CD4-positive, alpha-beta T cell (primary cell): ENCODE measurements at regions of chr1 and their contacts with region 1.

Region 1: GRCh38 chr1:41341772-41342562 is 19.3 kb upstream of the FOXO6 start:
- DNase-seq: peak in 1 of 14 experiments; percentile 21
- ATAC-seq: no peak
- H3K4me3 ChIP-seq: no peak overlapping the region
- H3K4me3 Mint-ChIP-seq: no peak overlapping the region
- H3K27ac ChIP-seq: no peak overlapping the region
- H3K27ac Mint-ChIP-seq: no peak overlapping the region
- H3K4me1 ChIP-seq: no peaks in the 10 kb centered on the region
- H3K4me1 Mint-ChIP-seq: no peaks in the 10 kb centered on the region
- H3K27me3 ChIP-seq: peaks cover 6 to 9% of the 10 kb centered on the region in 2 experiments
- H3K27me3 Mint-ChIP-seq: peaks cover 50% of the 10 kb centered on the region
- CTCF ChIP-seq: no peak

Region 2: GRCh38 chr1:41394959-41395956 is 53.3 kb after region 1 on chr1:
- CTCF ChIA-PET with region 1: no interaction called
- POLR2A ChIA-PET with region 1: no interaction called
- intact Hi-C with region 1: loop called in 1 of 2 experiments (anchors 5 kb)
- DNase-seq: no peak
- ATAC-seq: no peak
- H3K4me3 ChIP-seq: no peak overlapping the region
- H3K4me3 Mint-ChIP-seq: no peak overlapping the region
- H3K27ac ChIP-seq: no peak overlapping the region
- H3K27ac Mint-ChIP-seq: no peak overlapping the region
- H3K4me1 ChIP-seq: peaks cover 2% of the 10 kb centered on the region
- H3K4me1 Mint-ChIP-seq: no peaks in the 10 kb centered on the region
- H3K27me3 ChIP-seq: peaks cover 0 to 4% of the 10 kb centered on the region in 2 experiments
- H3K27me3 Mint-ChIP-seq: peaks cover 22% of the 10 kb centered on the region
- CTCF ChIP-seq: no peak